Thyroid gland (tissue), 4 donors: ENCODE measurements at regions of chr19 and their contacts with region 1.

Region 1: DNA sequence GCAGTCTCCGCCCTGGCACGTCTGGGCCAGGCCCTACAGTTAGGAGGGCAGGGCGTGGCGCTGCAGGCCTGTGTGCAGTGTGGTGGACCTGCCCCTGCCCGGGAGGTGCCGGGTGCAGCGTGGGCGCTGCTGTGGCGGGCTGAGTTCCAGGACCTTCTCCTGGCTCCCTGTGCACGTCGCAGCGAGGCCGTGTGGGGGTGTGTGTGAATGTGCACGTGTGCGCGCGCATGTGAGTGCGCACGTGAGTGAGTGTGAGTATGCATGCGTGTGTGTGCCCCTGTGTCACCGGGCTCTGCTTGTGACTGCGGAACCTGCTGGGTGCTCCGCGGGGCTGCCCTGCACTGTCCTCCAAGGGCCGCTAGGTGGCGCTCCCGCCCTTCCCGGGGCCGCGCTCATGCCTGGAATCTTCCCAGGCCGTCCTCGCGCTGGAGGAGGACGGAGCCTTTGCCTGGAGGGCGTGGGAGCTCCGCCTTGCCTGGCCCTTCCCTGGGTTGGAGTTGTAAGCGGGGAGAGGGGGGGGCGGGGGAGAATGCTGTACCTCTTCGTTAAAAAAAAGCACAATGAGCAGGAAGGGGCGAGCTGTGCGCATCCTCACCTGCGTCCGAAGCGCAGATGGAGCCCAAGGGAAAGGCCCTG is 79.3 kb downstream of the KDM4B start:
- DNase-seq: peak; percentile 74
- H3K4me3 ChIP-seq: no peak overlapping the region
- H3K27ac ChIP-seq: no peak overlapping the region
- H3K4me1 ChIP-seq: peaks cover 8 to 33% of the 10 kb centered on the region in 2 donors
- H3K27me3 ChIP-seq: no peaks in the 10 kb centered on the region
- CTCF ChIP-seq: peak; percentile 82 to 99 (median 91)
- POLR2A ChIP-seq: no peak

Region 2: GRCh38 chr19:5216141-5216847 is 168.1 kb after region 1 on chr19:
- intact Hi-C with region 1: no loop called
- DNase-seq: no peak
- H3K4me3 ChIP-seq: no peak overlapping the region
- H3K27ac ChIP-seq: no peak overlapping the region
- H3K4me1 ChIP-seq: no peaks in the 10 kb centered on the region
- H3K27me3 ChIP-seq: no peaks in the 10 kb centered on the region
- CTCF ChIP-seq: no peak
- POLR2A ChIP-seq: no peak

Region 3: GRCh38 chr19:5577785-5578493 is 529.7 kb after region 1 on chr19:
- intact Hi-C with region 1: loop called (anchors 5 kb)
- DNase-seq: peak; percentile 54 to 61
- H3K4me3 ChIP-seq: no peak overlapping the region
- H3K27ac ChIP-seq: no peak overlapping the region
- H3K4me1 ChIP-seq: peaks cover 13 to 34% of the 10 kb centered on the region in 2 donors
- H3K27me3 ChIP-seq: no peaks in the 10 kb centered on the region
- CTCF ChIP-seq: peak; percentile 80 to 99 (median 92)
- POLR2A ChIP-seq: no peak